Right ventricle myocardium superior (tissue), 1 donor: ENCODE measurements at regions of chr12 and their contacts with region 1.

Region 1: GRCh38 chr12:53625946-53626701 is at the start of gene ATF7:
- DNase-seq: peak; percentile 98
- ATAC-seq: peak; percentile 97
- total RNA-seq, gene ATF7: 29.1 TPM

Region 2: DNA sequence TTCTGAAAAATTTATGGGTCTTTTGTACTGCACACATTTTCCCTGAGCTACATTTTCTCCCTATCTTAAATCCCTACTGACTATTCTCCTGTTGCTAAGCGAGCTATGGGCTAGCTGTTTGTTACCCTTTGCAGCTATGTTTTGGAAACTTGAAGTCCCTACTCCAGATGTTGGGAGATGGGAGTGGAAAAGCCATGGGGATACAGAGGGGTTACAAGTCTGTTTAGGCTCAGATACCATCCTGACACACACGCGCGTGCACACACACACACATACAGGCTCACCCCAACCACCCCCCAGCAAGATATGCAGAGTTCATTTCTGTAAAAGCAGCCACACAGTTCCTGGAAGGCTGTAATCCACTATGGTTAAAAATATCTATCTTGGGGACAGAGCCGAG is 33.9 kb after region 1 on chr12:
- intact Hi-C with region 1: loop called (anchors 5 kb)
- DNase-seq: peak; percentile 63
- ATAC-seq: peak; percentile 65

Region 3: GRCh38 chr12:53675651-53676453 is 49.7 kb after region 1 on chr12 and contains the start of gene ATP5MC2:
- intact Hi-C with region 1: loop called (anchors 5 kb)
- DNase-seq: peak; percentile 98
- ATAC-seq: peak; percentile 96
- total RNA-seq, gene ATP5MC2: 569 TPM